ENCODE measurements at regions of chrX and their contacts with region 1.

Region 1: GRCh38 chrX:110836982-110837381 is 41.4 kb upstream of the CHRDL1 start:
- DNase-seq: peak; percentile 52
- ATAC-seq: peak; percentile 99
- H3K4me3 Mint-ChIP-seq: no peak overlapping the region
- H3K27ac Mint-ChIP-seq: no peak overlapping the region
- H3K4me1 Mint-ChIP-seq: no peaks in the 10 kb centered on the region
- H3K27me3 Mint-ChIP-seq: no peaks in the 10 kb centered on the region; the same call in 1 of the 2 replicates
- CTCF ChIP-seq: no peak

Region 2: DNA sequence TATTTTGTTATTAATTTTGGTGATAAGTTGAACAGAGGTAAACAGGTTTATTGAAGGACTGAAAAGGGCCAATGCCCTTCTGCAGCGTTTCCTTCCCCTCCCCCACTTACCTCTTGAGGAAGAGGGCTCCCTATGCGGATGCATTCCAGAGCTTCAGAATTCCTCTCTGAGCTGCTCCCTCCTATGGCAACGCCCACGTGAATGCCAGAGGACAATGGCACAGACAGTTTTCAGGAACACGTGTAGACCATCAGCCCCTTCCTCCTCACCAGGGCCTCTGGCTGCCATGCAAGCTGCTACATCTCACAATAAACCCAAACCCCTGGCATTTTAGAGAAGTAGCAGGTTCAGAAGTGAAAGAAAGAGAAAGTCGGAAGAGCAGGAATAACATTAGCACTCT is 169.3 kb before region 1 on chrX:
- CTCF ChIA-PET with region 1: interaction called, 10 read pairs
- POLR2A ChIA-PET with region 1: no interaction called
- DNase-seq: peak; percentile 59
- ATAC-seq: peak; percentile 94
- H3K4me3 Mint-ChIP-seq: no peak overlapping the region
- H3K27ac Mint-ChIP-seq: peak overlapping the region; percentile 93
- H3K4me1 Mint-ChIP-seq: peaks cover 20% of the 10 kb centered on the region
- H3K27me3 Mint-ChIP-seq: no peaks in the 10 kb centered on the region
- CTCF ChIP-seq: no peak

Region 3: DNA sequence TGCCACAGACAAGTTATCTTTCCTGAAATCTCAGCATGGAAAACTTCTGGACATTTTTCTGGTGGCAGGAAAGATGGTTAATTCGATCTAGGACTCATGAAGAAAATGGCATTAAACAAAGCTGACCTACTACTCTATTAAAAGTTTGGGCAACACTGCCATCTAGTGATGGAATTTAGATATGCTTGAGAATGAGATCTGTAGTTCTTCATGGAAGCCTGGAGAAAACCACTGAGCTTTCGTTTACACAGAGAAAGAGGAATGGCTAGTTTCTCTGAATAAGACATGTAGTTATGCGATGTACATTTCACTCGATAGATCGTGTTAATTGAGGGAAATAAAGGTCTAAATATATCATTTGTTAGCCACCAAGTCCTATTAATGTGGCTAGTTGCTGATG is 10.4 kb after region 1 on chrX:
- CTCF ChIA-PET with region 1: interaction called, 42 read pairs
- POLR2A ChIA-PET with region 1: no interaction called
- DNase-seq: no peak
- ATAC-seq: peak; percentile 77
- H3K4me3 Mint-ChIP-seq: no peak overlapping the region
- H3K27ac Mint-ChIP-seq: no peak overlapping the region
- H3K4me1 Mint-ChIP-seq: no peaks in the 10 kb centered on the region
- H3K27me3 Mint-ChIP-seq: no peaks in the 10 kb centered on the region
- CTCF ChIP-seq: 0 out of 2 replicates have a peak, but pooled peaks have one; percentile 28

Region 4: GRCh38 chrX:110853610-110854009 is 16.6 kb after region 1 on chrX:
- CTCF ChIA-PET with region 1: interaction called, 17 read pairs
- POLR2A ChIA-PET with region 1: no interaction called
- DNase-seq: peak; percentile 21
- ATAC-seq: peak; percentile 89
- H3K4me3 Mint-ChIP-seq: no peak overlapping the region
- H3K27ac Mint-ChIP-seq: no peak overlapping the region
- H3K4me1 Mint-ChIP-seq: peaks cover 3% of the 10 kb centered on the region; the same call in 1 of the 2 replicates
- H3K27me3 Mint-ChIP-seq: no peaks in the 10 kb centered on the region
- CTCF ChIP-seq: peak; percentile 17; the same call in 1 of the 2 replicates

Measured in WTC11 (cell line).